K562 (cell line): ENCODE measurements at regions of chr7 and their contacts with region 1.

Region 1: DNA sequence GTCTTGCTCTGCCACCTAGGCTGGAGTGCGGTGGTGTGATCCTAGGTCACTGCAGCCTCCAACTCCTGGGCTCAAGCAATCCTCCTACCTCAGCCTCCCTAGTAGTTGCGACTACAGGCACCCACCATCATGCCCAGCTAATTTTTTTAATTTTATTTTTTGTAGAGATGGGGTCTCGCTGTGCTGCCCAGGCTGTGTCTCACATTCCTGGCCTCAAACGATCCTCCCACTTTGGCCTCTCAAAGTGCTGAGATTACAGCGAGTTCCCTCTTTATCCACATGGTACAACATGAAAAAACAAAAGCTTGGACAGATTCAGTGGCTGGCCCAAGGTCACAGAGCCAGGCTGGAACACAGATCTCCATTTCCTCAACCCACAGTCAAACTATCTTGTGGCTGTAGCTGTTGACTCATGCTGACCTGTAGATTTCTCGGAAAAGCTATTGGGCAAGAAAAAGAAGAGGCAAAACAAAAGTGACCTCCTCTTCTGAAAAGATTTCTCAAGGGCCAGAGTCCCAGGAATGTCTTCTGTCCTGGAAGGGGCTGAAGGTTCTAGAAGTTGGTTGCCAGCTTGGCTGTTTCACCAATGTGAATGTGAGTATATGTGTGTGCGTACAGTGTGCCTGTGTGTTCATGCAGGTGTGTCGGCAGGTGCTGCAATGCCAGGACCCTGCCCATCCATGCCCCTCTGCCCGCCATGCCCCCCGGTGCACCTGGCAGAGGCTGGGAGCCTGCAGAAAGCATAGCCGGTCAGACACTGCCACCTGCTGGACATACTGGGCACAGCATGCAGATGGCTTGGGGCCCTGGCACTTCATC is 28.4 kb downstream of the TMEM130 start:
- DNase-seq: peak; percentile 69 to 87 (median 83)
- ATAC-seq: peak; percentile 82
- H3K4me3 ChIP-seq: no peak overlapping the region
- H3K27ac ChIP-seq: no peak overlapping the region
- H3K4me1 ChIP-seq: peaks cover 0 to 3% of the 10 kb centered on the region in 2 experiments; a peak in 2 of 5 replicates
- H3K27me3 ChIP-seq: peaks cover 18 to 42% of the 10 kb centered on the region in 2 experiments; a peak in 4 of 5 replicates
- CTCF ChIP-seq: peak; percentile 92 to 98 (median 94)
- EP300 ChIP-seq: no peak
- POLR2A ChIP-seq: no peak
- RAD21 ChIP-seq: peak; percentile 97

Region 2: GRCh38 chr7:97439637-97440214 is 1401.7 kb before region 1 on chr7:
- CTCF ChIA-PET with region 1: no interaction called
- POLR2A ChIA-PET with region 1: no interaction called
- in situ Hi-C with region 1: no loop called
- intact Hi-C with region 1: no loop called
- DNase-seq: peak in 1 of 4 experiments; percentile 26
- ATAC-seq: no peak
- H3K4me3 ChIP-seq: no peak overlapping the region
- H3K27ac ChIP-seq: no peak overlapping the region
- H3K4me1 ChIP-seq: no peaks in the 10 kb centered on the region
- H3K27me3 ChIP-seq: no peaks in the 10 kb centered on the region
- CTCF ChIP-seq: no peak
- EP300 ChIP-seq: no peak
- POLR2A ChIP-seq: no peak
- RAD21 ChIP-seq: no peak

Region 3: DNA sequence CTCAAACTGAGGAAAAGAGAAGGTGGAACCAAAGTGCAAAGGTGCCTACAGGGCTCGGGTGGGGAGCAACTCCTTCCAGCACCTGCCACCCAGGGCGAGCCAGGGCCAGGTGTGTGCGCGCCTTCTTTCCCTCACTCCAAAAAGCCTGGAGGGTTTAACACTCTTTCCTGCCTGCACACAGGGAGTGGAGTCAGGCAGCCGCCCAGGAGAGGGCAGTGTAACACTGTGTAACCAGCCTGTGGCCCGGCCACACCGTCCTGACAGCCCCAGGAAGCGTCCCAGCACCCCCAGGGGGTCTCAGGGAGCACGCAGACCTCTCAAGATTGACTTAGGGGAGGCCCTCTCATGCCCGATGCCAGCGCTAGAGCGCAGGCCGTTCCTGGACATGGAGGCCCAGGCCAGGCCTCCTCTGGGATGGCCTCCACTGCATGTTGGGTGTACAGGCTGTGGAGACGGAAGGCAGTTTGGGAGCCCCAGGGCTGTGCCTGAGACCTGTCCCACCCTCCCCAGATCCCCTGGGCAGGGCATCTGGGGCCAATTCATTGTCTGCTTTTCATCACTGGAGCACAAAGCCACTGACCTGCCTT is 546.5 kb before region 1 on chr7:
- CTCF ChIA-PET with region 1: interaction called, 4 read pairs
- POLR2A ChIA-PET with region 1: no interaction called
- in situ Hi-C with region 1: loop called (anchors 5 kb)
- intact Hi-C with region 1: loop called (anchors 5 kb)
- DNase-seq: peak; percentile 82 to 87 (median 85)
- ATAC-seq: peak; percentile 97
- H3K4me3 ChIP-seq: no peak overlapping the region
- H3K27ac ChIP-seq: no peak overlapping the region
- H3K4me1 ChIP-seq: peaks cover 0 to 10% of the 10 kb centered on the region in 2 experiments; a peak in 2 of 5 replicates
- H3K27me3 ChIP-seq: peaks cover 0 to 49% of the 10 kb centered on the region in 2 experiments; a peak in 2 of 5 replicates
- CTCF ChIP-seq: peak; percentile 87 to 93 (median 91)
- EP300 ChIP-seq: no peak
- POLR2A ChIP-seq: no peak
- RAD21 ChIP-seq: peak; percentile 83 to 92

Region 4: GRCh38 chr7:98434095-98434494 is 407.3 kb before region 1 on chr7:
- CTCF ChIA-PET with region 1: interaction called, 37 read pairs
- POLR2A ChIA-PET with region 1: no interaction called
- in situ Hi-C with region 1: loop called (anchors 5 kb)
- intact Hi-C with region 1: loop called (anchors 1 kb)
- DNase-seq: no peak
- ATAC-seq: no peak
- H3K4me3 ChIP-seq: no peak overlapping the region
- H3K27ac ChIP-seq: no peak overlapping the region
- H3K4me1 ChIP-seq: no peaks in the 10 kb centered on the region; a peak in 1 of 5 replicates
- H3K27me3 ChIP-seq: peaks cover 3 to 36% of the 10 kb centered on the region in 2 experiments; a peak in 3 of 5 replicates
- CTCF ChIP-seq: no peak
- EP300 ChIP-seq: no peak
- POLR2A ChIP-seq: no peak
- RAD21 ChIP-seq: no peak

Region 5: GRCh38 chr7:98733036-98733435 is 108.4 kb before region 1 on chr7:
- CTCF ChIA-PET with region 1: interaction called, 6 read pairs
- POLR2A ChIA-PET with region 1: no interaction called
- in situ Hi-C with region 1: no loop called
- intact Hi-C with region 1: loop called (anchors 2 kb)
- DNase-seq: peak; percentile 81 to 91 (median 86)
- ATAC-seq: peak; percentile 98
- H3K4me3 ChIP-seq: no peak overlapping the region
- H3K27ac ChIP-seq: no peak overlapping the region
- H3K4me1 ChIP-seq: no peaks in the 10 kb centered on the region
- H3K27me3 ChIP-seq: peaks cover 3 to 35% of the 10 kb centered on the region in 2 experiments; a peak in 4 of 5 replicates
- CTCF ChIP-seq: peak; percentile 77 to 93 (median 85)
- EP300 ChIP-seq: no peak
- POLR2A ChIP-seq: no peak
- RAD21 ChIP-seq: peak in 1 of 2 experiments; percentile 63; a peak in 2 of 4 replicates

Region 6: DNA sequence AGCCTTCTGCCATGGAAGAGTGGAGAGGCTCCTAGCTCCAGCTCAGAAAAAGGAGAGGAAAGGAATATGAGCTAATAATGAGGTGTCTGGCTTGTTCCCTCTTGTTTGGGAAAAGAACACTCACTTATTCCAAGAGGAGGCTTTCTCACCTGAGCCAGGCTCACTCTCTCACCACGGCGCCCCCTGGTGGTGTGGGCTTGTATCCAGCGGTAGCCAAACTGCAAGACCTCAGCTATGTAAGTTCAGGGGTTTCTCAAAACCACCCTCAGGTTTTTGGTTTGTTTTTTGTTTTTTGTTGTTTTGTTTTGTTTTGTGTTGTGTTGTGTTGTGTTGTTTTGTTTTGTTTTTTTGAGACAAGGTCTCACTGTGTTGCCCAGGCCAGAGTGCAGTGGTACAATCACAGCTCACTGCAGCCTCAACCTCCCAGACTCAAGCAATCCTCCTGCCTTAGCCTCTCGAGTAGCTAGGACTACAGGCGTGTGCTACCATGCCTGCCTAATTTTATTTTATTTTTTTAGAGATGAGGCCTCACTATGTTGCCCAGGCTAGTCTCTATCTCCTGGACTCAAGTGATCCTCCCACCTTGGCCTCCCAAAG is 95.6 kb before region 1 on chr7:
- CTCF ChIA-PET with region 1: no interaction called
- POLR2A ChIA-PET with region 1: interaction called, 3 read pairs
- in situ Hi-C with region 1: loop called (anchors 5 kb)
- intact Hi-C with region 1: no loop called
- DNase-seq: peak; percentile 78 to 88 (median 86)
- ATAC-seq: peak; percentile 96
- H3K4me3 ChIP-seq: no peak overlapping the region
- H3K27ac ChIP-seq: no peak overlapping the region
- H3K4me1 ChIP-seq: no peaks in the 10 kb centered on the region
- H3K27me3 ChIP-seq: peaks cover 16 to 39% of the 10 kb centered on the region in 2 experiments; a peak in 4 of 5 replicates
- CTCF ChIP-seq: peak; percentile 82 to 90 (median 89)
- EP300 ChIP-seq: no peak
- POLR2A ChIP-seq: no peak
- RAD21 ChIP-seq: peak; percentile 54 to 71

Region 7: DNA sequence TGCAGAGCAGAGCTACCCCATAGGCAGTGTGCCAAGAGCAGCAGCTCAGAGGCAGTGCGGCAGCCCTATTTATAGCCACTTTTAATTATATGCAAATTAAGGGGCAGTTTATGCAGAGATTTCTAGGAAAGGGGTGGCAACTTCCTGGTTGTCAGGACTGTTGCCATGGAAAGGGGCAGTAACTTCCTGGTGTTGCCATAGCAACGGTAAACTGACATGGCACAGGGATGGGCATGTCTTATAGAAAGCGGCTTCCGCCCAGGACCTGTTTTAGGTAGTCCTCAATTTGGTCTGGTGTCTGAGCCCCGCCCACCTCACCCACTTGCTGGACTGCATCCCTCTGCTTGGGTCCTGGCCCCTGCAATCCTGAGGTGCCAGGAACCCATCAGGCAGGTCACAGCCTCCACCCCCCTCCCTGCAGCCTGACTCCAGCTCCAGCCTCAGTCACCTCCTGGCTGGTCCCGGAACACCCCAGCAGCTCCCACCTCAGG is 87.4 kb before region 1 on chr7:
- CTCF ChIA-PET with region 1: interaction called, 7 read pairs
- POLR2A ChIA-PET with region 1: no interaction called
- in situ Hi-C with region 1: loop called (anchors 5 kb)
- intact Hi-C with region 1: loop called (anchors 2 kb)
- DNase-seq: peak in 1 of 4 experiments; percentile 22
- ATAC-seq: peak; percentile 64
- H3K4me3 ChIP-seq: no peak overlapping the region
- H3K27ac ChIP-seq: no peak overlapping the region
- H3K4me1 ChIP-seq: peaks cover 0 to 4% of the 10 kb centered on the region in 2 experiments; a peak in 1 of 5 replicates
- H3K27me3 ChIP-seq: peaks cover 8 to 24% of the 10 kb centered on the region in 2 experiments; a peak in 4 of 5 replicates
- CTCF ChIP-seq: no peak
- EP300 ChIP-seq: no peak
- POLR2A ChIP-seq: no peak
- RAD21 ChIP-seq: no peak